ENCODE measurements at regions of chr6 and their contacts with region 1.

Region 1: DNA sequence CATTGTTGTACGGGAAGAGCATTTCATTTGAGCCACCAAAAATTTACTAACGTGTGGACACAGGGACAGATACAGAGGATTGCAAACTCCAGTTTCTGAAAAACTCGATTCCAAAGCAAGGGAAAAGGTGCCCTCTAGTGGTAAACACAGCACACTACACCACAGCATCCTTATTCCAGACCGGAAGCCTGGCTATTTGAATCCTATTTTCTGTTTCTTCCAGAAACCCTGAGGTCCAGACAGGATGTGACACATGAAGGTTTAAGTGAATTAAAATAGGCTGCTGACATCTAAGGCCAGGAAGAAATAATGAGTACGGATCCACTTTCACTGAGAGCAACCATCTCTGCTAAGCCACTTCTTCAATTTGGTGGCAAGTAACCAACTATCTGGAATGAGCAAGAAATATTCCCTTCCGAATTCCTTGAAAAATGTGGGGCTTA is 31.8 kb upstream of the GMPR start:
- DNase-seq: no peak
- ATAC-seq: peak; percentile 84

Region 2: DNA sequence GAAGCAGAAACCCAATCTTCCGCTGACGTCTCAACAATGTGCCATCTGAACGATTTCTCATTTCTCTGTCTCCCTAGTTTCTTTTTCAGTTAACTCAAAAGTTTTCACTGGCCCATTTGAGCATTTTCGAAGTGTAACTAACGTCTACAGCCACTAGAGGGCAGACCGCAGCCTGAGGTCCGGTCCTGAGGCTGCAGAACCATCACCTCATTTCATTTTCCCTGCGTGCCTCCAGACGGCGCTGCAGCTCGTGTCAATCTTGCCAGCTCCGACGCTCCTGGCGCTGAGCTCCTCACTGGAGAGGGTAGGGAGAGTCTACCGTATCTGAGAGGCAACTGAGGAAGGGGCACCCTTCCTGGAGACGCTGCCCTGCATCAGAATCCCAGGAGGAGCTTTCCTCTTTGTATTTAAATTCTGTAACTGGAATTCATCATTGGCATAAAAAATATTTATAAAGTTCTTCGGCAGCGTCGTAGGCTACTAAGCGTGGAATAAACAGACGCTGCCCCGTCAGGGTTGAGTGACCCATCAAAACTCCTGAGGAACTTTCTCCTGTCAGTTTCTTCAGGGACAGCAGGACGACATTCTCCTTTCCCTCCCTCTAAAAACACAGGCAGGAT is 515.3 kb before region 1 on chr6:
- intact Hi-C with region 1: loop called (anchors 2 kb)
- DNase-seq: peak; percentile 91
- ATAC-seq: peak; percentile 99